ENCODE measurements at regions of chr1 and their contacts with region 1.

Region 1: GRCh38 chr1:229341774-229342655 is 832 bp downstream of the CCSAP start:
- DNase-seq: peak; percentile 80 to 89 (median 83)
- H3K4me3 ChIP-seq: peak overlapping the region; percentile 47 to 93 (median 84)
- H3K4me3 Mint-ChIP-seq: peak overlapping the region; percentile 91 to 93
- H3K27ac ChIP-seq: peak overlapping the region; percentile 69 to 79
- H3K27ac Mint-ChIP-seq: peak overlapping the region; percentile 87 to 97 (median 94)
- H3K4me1 ChIP-seq: peaks cover 38 to 56% of the 10 kb centered on the region in 2 donors
- H3K4me1 Mint-ChIP-seq: peaks cover 54% of the 10 kb centered on the region
- H3K27me3 ChIP-seq: no peaks in the 10 kb centered on the region
- H3K27me3 Mint-ChIP-seq: peaks cover 4 to 11% (median 8%) of the 10 kb centered on the region in 3 donors
- CTCF ChIP-seq: no peak

Region 2: GRCh38 chr1:228374711-228375577 is 967.1 kb before region 1 on chr1:
- intact Hi-C with region 1: no loop called
- DNase-seq: no peak
- H3K4me3 ChIP-seq: no peak overlapping the region
- H3K4me3 Mint-ChIP-seq: no peak overlapping the region
- H3K27ac ChIP-seq: no peak overlapping the region
- H3K27ac Mint-ChIP-seq: no peak overlapping the region
- H3K4me1 ChIP-seq: peaks cover 7 to 9% of the 10 kb centered on the region in 2 donors
- H3K4me1 Mint-ChIP-seq: peaks cover 7% of the 10 kb centered on the region
- H3K27me3 ChIP-seq: peaks cover 4 to 23% of the 10 kb centered on the region in 2 donors
- H3K27me3 Mint-ChIP-seq: peaks cover 15 to 24% (median 22%) of the 10 kb centered on the region in 3 donors
- CTCF ChIP-seq: no peak

Region 3: DNA sequence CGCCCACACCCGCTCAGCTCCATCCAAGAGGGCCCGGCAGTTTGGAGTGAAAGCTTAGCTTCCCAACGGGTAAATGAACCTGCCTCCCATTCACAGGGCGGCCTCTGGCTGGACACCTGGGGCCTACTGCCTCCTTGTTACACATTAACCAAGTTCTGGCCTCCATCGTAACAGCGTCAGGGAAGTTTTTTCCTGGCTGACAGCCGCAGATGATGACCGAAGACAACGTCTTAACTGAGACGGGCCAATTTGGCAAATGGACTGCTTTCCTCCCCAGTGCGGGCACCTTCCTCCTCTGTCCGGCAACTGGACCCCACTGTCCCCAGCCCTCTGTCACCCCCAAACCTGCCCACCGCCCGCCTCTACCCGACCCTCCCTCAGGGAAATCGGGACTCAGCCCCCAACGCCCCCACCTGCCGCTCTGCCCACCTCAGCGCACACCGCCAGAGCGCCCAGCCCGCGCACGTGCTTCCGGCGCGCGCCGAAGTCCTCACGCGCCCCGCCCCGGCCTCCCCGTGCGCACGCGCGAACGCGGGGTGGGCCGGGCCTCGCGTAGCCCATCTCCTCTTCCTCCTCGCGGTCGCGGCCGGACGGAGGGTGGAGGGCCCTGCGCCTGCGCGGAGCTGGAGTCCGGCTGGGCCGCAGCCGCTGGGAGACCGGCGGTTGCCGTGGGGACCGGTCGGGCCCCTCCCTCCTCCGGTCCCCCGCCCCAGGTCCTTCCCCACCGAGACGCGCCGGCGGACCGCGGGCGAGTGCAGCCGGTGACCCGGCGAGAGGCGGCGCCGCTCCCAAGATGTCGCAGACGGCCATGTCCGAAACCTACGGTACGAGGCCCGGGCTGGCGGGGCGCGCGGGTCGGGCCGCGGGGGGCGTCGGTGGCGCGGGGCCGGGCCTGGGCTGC is 71.2 kb before region 1 on chr1 and contains the start of gene RAB4A:
- intact Hi-C with region 1: loop called (anchors 5 kb)
- DNase-seq: peak; percentile 83 to 90 (median 86)
- H3K4me3 ChIP-seq: peak within 1 kb of the TSS; percentile 67 to 93 (median 77)
- H3K4me3 Mint-ChIP-seq: peak within 1 kb of the TSS; percentile 93 to 95
- H3K27ac ChIP-seq: peak within 1 kb of the TSS; percentile 16 to 77
- H3K27ac Mint-ChIP-seq: peak within 1 kb of the TSS; percentile 77 to 91 (median 85)
- H3K4me1 ChIP-seq: peaks cover 46 to 50% of the 10 kb centered on the region in 2 donors
- H3K4me1 Mint-ChIP-seq: peaks cover 54% of the 10 kb centered on the region
- H3K27me3 ChIP-seq: no peaks in the 10 kb centered on the region
- H3K27me3 Mint-ChIP-seq: no peaks in the 10 kb centered on the region
- CTCF ChIP-seq: no peak
- polyA plus RNA-seq, gene RAB4A: 22.3 to 34.8 (median 34.5) TPM

Region 4: GRCh38 chr1:229619614-229620013 is 277.6 kb after region 1 on chr1:
- intact Hi-C with region 1: no loop called
- DNase-seq: no peak
- H3K4me3 ChIP-seq: no peak overlapping the region
- H3K4me3 Mint-ChIP-seq: no peak overlapping the region
- H3K27ac ChIP-seq: peak overlapping the region in 1 of 2 donors; percentile 33
- H3K27ac Mint-ChIP-seq: peak overlapping the region in 3 of 7 donors; percentile 1 to 36 (median 7)
- H3K4me1 ChIP-seq: peaks cover 4 to 8% of the 10 kb centered on the region in 2 donors
- H3K4me1 Mint-ChIP-seq: peaks cover 29% of the 10 kb centered on the region
- H3K27me3 ChIP-seq: no peaks in the 10 kb centered on the region
- H3K27me3 Mint-ChIP-seq: no peaks in the 10 kb centered on the region
- CTCF ChIP-seq: no peak

Measured in CD14-positive monocyte (primary cell).